Caco-2 (cell line): ENCODE measurements at regions of chr3 and their contacts with region 1.

Region 1: DNA sequence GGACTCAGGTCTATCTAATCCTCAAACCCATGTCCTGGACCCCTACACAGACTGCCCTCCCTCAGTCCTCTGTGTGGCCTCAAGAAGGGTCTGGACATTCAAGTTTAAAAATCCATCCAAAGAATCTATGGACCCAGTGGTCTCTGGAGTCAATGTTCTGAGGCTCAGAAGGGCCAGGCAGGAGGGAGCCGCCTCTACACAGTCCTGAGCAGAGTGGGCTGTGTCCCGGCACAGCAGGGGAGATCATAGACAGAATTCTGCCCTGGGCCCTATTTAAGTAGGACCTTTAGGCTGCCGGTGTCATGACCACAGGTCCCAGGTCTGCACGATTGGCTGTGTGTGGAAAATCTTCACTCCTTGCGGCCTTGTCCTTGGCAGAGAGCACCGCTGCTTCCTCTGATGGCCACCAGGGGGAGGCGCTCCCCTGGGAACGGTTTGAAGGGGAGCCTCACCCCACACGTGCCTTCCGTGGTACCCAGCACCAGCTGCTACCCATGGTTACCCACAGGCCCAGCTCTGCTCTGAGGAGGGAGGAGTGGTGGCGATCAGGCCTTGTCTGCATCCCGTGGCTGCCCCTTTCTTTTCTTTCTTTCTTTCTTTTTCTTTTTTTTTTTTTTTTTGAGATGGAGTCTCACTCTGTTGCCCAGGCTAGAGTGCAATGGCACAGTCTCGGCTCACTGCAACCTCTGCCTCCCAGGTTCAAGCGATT is 37.9 kb downstream of the CHRD start:
- DNase-seq: peak; percentile 66 to 71
- H3K4me3 ChIP-seq: no peak overlapping the region
- H3K4me3 Mint-ChIP-seq: no peak overlapping the region
- H3K27ac Mint-ChIP-seq: no peak overlapping the region
- H3K4me1 ChIP-seq: peaks cover 11% of the 10 kb centered on the region
- H3K4me1 Mint-ChIP-seq: no peaks in the 10 kb centered on the region
- H3K27me3 ChIP-seq: no peaks in the 10 kb centered on the region
- H3K27me3 Mint-ChIP-seq: no peaks in the 10 kb centered on the region
- CTCF ChIP-seq: peak; percentile 85 to 89

Region 2: GRCh38 chr3:184371570-184372018 is 46.2 kb before region 1 on chr3:
- CTCF ChIA-PET with region 1: interaction called, 10 read pairs
- POLR2A ChIA-PET with region 1: no interaction called
- intact Hi-C with region 1: loop called (anchors 1 kb)
- DNase-seq: peak; percentile 85 to 88
- H3K4me3 ChIP-seq: no peak overlapping the region
- H3K4me3 Mint-ChIP-seq: no peak overlapping the region
- H3K27ac Mint-ChIP-seq: no peak overlapping the region
- H3K4me1 ChIP-seq: no peaks in the 10 kb centered on the region
- H3K4me1 Mint-ChIP-seq: peaks cover 7% of the 10 kb centered on the region
- H3K27me3 ChIP-seq: no peaks in the 10 kb centered on the region
- H3K27me3 Mint-ChIP-seq: no peaks in the 10 kb centered on the region
- CTCF ChIP-seq: peak; percentile 95 to 99

Region 3: DNA sequence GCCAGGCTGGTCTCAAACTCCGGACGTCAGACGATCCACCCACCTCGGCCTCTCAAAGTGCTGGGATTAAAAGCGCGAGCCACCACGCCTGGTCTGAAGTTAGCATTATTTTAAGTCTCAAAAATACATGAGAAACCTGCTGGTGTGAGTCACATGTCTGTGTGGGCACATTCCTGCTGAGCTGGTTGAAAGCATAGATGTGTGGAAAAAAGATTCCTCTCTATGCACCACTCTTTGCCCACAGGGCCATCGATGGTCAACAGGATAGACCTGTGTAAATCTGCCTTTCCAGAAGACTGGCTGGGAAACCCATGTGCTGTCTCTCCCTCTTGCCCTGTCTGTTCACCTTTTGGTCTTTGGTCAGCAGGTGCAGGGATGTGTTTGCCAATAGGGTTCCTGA is 25.6 kb after region 1 on chr3:
- CTCF ChIA-PET with region 1: no interaction called
- POLR2A ChIA-PET with region 1: no interaction called
- intact Hi-C with region 1: loop called (anchors 2 kb)
- DNase-seq: no peak
- H3K4me3 ChIP-seq: no peak overlapping the region
- H3K4me3 Mint-ChIP-seq: no peak overlapping the region
- H3K27ac Mint-ChIP-seq: no peak overlapping the region
- H3K4me1 ChIP-seq: peaks cover 21% of the 10 kb centered on the region
- H3K4me1 Mint-ChIP-seq: peaks cover 28% of the 10 kb centered on the region
- H3K27me3 ChIP-seq: no peaks in the 10 kb centered on the region
- H3K27me3 Mint-ChIP-seq: no peaks in the 10 kb centered on the region
- CTCF ChIP-seq: no peak

Region 4: DNA sequence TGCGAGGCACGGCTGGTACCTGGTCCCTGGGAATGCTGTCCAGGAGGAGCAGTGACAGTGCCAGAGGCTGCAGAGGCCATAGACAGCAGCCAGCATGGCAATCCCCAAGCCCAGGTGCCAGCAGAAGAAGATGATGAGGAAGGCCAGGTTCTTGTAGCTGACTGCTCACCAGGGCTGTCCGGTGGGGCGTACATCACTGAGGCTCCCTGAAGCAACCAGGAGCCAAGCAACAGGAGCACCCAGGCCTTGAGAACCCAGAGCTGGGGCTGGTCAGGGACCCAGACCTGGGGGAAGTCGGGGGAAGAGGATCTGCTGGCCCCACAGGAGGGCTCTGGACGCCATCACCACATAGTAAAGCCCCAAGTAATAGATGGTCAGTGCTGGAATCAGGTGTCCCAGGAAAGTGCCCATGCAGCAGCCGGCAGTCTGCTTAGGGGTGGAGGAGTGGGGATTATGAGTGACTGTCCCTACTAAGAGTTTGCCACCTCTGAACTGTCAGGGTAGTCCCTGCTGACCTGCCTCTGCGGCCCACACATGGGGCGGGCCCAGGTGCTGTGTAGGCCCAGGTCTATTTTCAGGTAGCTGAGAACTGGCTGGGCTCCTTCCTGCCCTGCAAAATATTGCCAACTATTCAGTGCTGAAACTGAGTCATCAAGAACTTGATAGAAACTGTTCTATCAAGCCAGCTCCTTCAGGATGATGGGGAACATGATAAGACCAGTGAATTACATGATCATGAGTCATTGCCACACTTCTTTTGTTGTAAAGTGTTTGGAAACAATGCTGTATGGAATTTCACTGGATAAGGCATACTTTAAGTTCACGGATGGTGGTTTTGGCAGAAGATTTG is 30.8 kb after region 1 on chr3:
- CTCF ChIA-PET with region 1: no interaction called
- POLR2A ChIA-PET with region 1: interaction called, 16 read pairs
- intact Hi-C with region 1: no loop called
- DNase-seq: peak in 1 of 2 experiments; percentile 12
- H3K4me3 ChIP-seq: no peak overlapping the region
- H3K4me3 Mint-ChIP-seq: no peak overlapping the region
- H3K27ac Mint-ChIP-seq: no peak overlapping the region
- H3K4me1 ChIP-seq: peaks cover 15% of the 10 kb centered on the region
- H3K4me1 Mint-ChIP-seq: no peaks in the 10 kb centered on the region
- H3K27me3 ChIP-seq: no peaks in the 10 kb centered on the region
- H3K27me3 Mint-ChIP-seq: no peaks in the 10 kb centered on the region
- CTCF ChIP-seq: no peak

Region 5: GRCh38 chr3:184469423-184469822 is 51.6 kb after region 1 on chr3:
- CTCF ChIA-PET with region 1: interaction called, 3 read pairs
- POLR2A ChIA-PET with region 1: no interaction called
- intact Hi-C with region 1: loop called (anchors 1 kb)
- DNase-seq: peak; percentile 60 to 63
- H3K4me3 ChIP-seq: no peak overlapping the region
- H3K4me3 Mint-ChIP-seq: no peak overlapping the region
- H3K27ac Mint-ChIP-seq: no peak overlapping the region
- H3K4me1 ChIP-seq: 0 out of 2 replicates have a peak, but pooled peaks cover 6% of the 10 kb centered on the region
- H3K4me1 Mint-ChIP-seq: no peaks in the 10 kb centered on the region
- H3K27me3 ChIP-seq: no peaks in the 10 kb centered on the region
- H3K27me3 Mint-ChIP-seq: peaks cover 5% of the 10 kb centered on the region
- CTCF ChIP-seq: peak; percentile 77 to 78

Region 6: DNA sequence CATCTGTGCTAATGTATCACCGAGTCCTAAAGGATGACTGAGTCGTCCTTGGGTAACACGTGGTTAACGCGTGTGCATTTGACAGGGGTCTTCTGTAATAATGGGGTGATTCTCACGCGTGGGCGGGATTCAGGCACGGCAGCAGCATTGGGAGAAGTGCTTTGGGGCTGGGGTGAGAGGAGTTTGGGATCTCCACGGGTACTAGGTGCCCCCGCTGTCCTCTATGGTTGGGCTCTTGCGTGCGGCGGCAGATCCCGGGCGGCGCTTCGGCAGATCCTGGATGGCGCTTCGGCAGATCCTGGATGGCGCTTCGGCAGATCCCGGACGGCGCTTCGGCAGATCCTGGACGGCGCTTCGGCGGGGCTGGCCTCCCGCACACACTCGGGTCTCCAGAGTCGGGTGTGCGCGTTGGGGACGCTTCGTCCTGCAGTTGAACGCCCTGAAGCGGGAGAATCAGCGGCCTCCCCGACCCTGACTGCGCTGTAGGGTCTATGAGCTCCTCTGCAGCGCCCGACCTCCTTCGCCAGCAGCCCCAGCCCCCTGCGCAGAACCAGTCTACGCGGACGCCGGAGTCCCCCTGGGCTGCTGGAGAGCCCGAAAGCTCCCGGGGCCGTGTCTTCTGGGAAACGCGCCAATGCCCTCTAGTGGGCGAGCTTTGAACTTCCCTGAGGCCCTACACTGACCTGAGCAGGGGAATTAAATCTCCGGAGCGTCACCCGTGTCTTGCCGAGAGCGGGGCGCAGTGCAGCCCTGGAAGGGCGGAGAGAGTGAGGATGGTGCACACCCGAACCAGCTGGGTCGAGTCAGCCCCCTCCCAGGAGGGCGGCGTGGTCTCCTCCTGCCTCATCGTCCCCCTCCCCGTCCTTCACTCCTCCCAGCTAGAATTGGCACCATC is 95.8 kb after region 1 on chr3:
- CTCF ChIA-PET with region 1: interaction called, 12 read pairs
- POLR2A ChIA-PET with region 1: no interaction called
- intact Hi-C with region 1: loop called (anchors 1 kb)
- DNase-seq: peak; percentile 84 to 90
- H3K4me3 ChIP-seq: peak overlapping the region; percentile 59
- H3K4me3 Mint-ChIP-seq: peak overlapping the region; percentile 33
- H3K27ac Mint-ChIP-seq: no peak overlapping the region
- H3K4me1 ChIP-seq: no peaks in the 10 kb centered on the region
- H3K4me1 Mint-ChIP-seq: no peaks in the 10 kb centered on the region
- H3K27me3 ChIP-seq: no peaks in the 10 kb centered on the region
- H3K27me3 Mint-ChIP-seq: peaks cover 15% of the 10 kb centered on the region
- CTCF ChIP-seq: peak; percentile 87

Region 7: GRCh38 chr3:184543843-184544512 is 126.2 kb after region 1 on chr3:
- CTCF ChIA-PET with region 1: interaction called, 7 read pairs
- POLR2A ChIA-PET with region 1: no interaction called
- intact Hi-C with region 1: loop called (anchors 2 kb)
- DNase-seq: peak; percentile 80 to 87
- H3K4me3 ChIP-seq: no peak overlapping the region
- H3K4me3 Mint-ChIP-seq: no peak overlapping the region
- H3K27ac Mint-ChIP-seq: no peak overlapping the region
- H3K4me1 ChIP-seq: no peaks in the 10 kb centered on the region
- H3K4me1 Mint-ChIP-seq: no peaks in the 10 kb centered on the region
- H3K27me3 ChIP-seq: no peaks in the 10 kb centered on the region
- H3K27me3 Mint-ChIP-seq: peaks cover 6% of the 10 kb centered on the region
- CTCF ChIP-seq: peak; percentile 77 to 89